ENCODE measurements at regions of chr12 and their contacts with region 1.

Region 1: DNA sequence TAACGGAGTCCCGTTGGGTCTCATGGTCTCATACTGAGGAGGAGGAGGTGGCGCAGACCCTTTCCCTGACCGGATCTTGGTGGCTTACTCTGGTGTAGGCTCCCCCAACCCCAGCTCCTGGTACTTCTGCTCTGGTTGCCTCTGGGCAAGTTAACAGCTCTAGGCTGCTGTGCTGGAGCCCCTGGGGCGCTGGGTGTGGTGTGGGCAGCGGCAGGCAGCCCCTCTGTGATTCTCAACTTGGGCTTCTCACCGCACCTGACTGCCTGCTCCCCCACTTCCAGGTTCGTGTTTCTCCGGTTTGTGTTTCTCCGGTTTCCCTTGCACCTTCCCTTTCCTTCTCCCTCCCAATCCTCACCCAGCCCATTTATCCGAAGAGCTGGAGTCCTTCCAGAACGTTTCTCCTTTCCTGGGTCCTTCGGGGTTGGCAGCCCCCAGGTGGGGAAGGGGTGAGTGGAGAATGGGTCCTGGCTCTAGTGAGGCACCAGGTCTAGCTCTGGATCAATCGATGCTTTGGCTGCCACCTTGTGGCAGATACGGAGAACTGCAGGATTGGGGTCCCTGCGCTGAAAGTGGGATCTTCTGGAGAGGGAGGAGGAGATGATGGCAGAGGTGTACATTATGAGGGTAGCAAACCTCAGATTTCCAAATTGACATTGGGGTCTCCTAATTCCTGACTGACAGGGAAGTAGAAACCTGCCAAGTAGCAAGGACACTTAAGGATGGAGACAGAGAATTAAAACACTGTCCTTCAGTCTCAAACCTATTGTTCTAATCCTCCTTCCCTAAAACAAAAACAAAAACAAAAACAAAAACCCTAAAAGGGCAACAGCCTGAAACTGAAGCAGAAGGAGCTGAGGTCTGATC is 8.3 kb downstream of the CISTR start:
- DNase-seq: peak; percentile 60
- H3K4me3 ChIP-seq: no peak overlapping the region
- H3K27ac ChIP-seq: no peak overlapping the region
- H3K4me1 ChIP-seq: peaks cover 19% of the 10 kb centered on the region
- H3K27me3 ChIP-seq: no peaks in the 10 kb centered on the region
- CTCF ChIP-seq: peak; percentile 81 to 98 (median 91)
- POLR2A ChIP-seq: no peak

Region 2: GRCh38 chr12:53677800-53678148 is 65.7 kb before region 1 on chr12:
- intact Hi-C with region 1: no loop called
- DNase-seq: peak; percentile 30
- H3K4me3 ChIP-seq: peak overlapping the region in 1 of 2 donors; percentile 87
- H3K27ac ChIP-seq: peak overlapping the region; percentile 97 to 99
- H3K4me1 ChIP-seq: peaks cover 23% of the 10 kb centered on the region
- H3K27me3 ChIP-seq: no peaks in the 10 kb centered on the region
- CTCF ChIP-seq: no peak
- POLR2A ChIP-seq: no peak

Region 3: GRCh38 chr12:53701518-53702260 is 41.8 kb before region 1 on chr12:
- intact Hi-C with region 1: loop called (anchors 5 kb)
- DNase-seq: peak; percentile 87
- H3K4me3 ChIP-seq: no peak overlapping the region
- H3K27ac ChIP-seq: no peak overlapping the region
- H3K4me1 ChIP-seq: no peaks in the 10 kb centered on the region
- H3K27me3 ChIP-seq: no peaks in the 10 kb centered on the region
- CTCF ChIP-seq: peak; percentile 72 to 83 (median 82)
- POLR2A ChIP-seq: no peak

Region 4: DNA sequence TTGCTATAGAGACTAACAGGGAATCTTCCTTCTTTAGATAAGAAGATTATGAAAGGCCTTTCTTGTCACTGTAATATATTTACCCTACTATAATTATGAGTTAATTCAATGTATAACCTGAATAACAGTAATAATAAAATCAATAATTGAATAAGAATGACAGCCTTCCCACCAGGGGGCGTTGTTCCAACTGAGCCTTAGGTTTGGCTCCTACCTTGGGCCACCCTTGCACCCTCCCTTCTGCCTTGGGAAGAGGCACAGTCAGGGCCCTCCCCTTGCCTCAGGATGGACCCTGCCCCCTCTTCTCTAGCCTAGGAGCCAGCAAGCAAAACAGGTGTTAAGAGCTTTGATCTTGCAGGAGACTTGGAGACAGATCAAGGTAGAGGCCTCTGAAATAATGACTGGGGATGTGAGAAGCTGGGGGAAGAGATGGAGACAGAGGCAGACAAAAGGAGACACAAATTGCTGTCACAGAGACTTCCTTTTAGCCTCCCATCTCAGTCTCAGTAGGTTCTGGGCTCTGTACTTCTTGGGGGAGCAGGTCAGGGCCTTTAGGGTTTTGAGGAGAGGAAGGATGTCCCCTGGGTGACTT is 48.3 kb after region 1 on chr12:
- intact Hi-C with region 1: no loop called
- DNase-seq: peak; percentile 34
- H3K4me3 ChIP-seq: no peak overlapping the region
- H3K27ac ChIP-seq: no peak overlapping the region
- H3K4me1 ChIP-seq: no peaks in the 10 kb centered on the region
- H3K27me3 ChIP-seq: no peaks in the 10 kb centered on the region
- CTCF ChIP-seq: peak in 2 of 3 experiments; percentile 14 to 62
- POLR2A ChIP-seq: no peak

Region 5: GRCh38 chr12:53935383-53936341 is 192.2 kb after region 1 on chr12:
- intact Hi-C with region 1: no loop called
- DNase-seq: no peak
- H3K4me3 ChIP-seq: no peak overlapping the region
- H3K27ac ChIP-seq: no peak overlapping the region
- H3K4me1 ChIP-seq: no peaks in the 10 kb centered on the region
- H3K27me3 ChIP-seq: peaks cover 12% of the 10 kb centered on the region
- CTCF ChIP-seq: no peak
- POLR2A ChIP-seq: no peak